ENCODE measurements at regions of chr5 and their contacts with region 1.

Region 1: GRCh38 chr5:177022384-177023308 is at the start of gene ZNF346:
- DNase-seq: peak; percentile 94
- H3K4me3 ChIP-seq: peak within 1 kb of the TSS; percentile 90
- H3K27ac ChIP-seq: peak within 1 kb of the TSS; percentile 84
- H3K4me1 ChIP-seq: peaks cover 20% of the 10 kb centered on the region
- H3K27me3 ChIP-seq: no peaks in the 10 kb centered on the region
- CTCF ChIP-seq: peak; percentile 40
- total RNA-seq, gene ZNF346: 27.3 and 29.3 TPM in 2 replicates

Region 2: DNA sequence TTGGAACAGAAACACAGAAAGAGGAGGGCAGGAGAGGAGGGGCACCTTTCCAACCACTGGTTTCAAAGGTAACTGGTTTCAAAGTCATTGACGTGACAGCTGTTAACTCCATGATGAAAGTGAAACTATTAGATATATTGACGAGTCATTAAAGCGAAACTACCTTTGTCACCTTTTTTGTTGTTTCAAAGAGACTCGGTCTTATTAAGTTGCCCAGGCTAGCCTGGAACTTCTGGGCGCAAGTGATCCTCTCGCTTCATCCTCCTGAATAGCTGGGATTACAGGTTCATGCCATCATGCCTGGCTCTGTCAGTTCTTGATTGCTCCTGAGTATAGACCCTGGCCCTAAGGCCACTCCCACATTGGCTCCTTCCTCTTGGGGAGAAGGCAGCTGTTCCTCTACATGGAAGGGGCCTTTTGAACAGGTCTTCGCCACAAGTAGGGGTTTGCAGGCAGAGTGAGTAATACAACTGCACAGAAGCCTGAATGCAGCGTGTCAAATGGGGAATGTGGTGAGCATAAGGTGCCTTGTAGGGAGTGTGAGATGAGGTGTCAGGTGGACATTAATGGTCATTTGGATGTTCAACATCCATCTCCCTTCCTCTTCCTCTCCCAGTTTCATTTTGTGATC is 390.1 kb after region 1 on chr5:
- CTCF ChIA-PET with region 1: no interaction called
- POLR2A ChIA-PET with region 1: interaction called, 15 read pairs
- intact Hi-C with region 1: no loop called
- DNase-seq: no peak
- H3K4me3 ChIP-seq: no peak overlapping the region
- H3K27ac ChIP-seq: no peak overlapping the region
- H3K4me1 ChIP-seq: no peaks in the 10 kb centered on the region
- H3K27me3 ChIP-seq: no peaks in the 10 kb centered on the region
- CTCF ChIP-seq: no peak

Measured in A673 (cell line).